ENCODE measurements at regions of chr1 and their contacts with region 1.

Region 1: GRCh38 chr1:176897350-176898236 is 266.9 kb downstream of the ASTN1 start:
- DNase-seq: peak; percentile 79
- H3K4me3 ChIP-seq: peak overlapping the region; percentile 22 to 50; a peak in 2 of 4 replicates
- H3K27ac ChIP-seq: peak overlapping the region in 1 of 2 experiments; percentile 81; a peak in 2 of 4 replicates
- H3K4me1 ChIP-seq: peaks cover 0 to 12% of the 10 kb centered on the region in 2 experiments; a peak in 2 of 4 replicates
- H3K27me3 ChIP-seq: no peaks in the 10 kb centered on the region; the same call in 1 of the 2 replicates
- CTCF ChIP-seq: peak; percentile 94
- EP300 ChIP-seq: no peak
- RAD21 ChIP-seq: peak; percentile 87

Region 2: GRCh38 chr1:176811511-176812288 is 85.9 kb before region 1 on chr1:
- CTCF ChIA-PET with region 1: no interaction called
- POLR2A ChIA-PET with region 1: no interaction called
- DNase-seq: no peak
- H3K4me3 ChIP-seq: no peak overlapping the region
- H3K27ac ChIP-seq: no peak overlapping the region
- H3K4me1 ChIP-seq: no peaks in the 10 kb centered on the region
- H3K27me3 ChIP-seq: no peaks in the 10 kb centered on the region
- CTCF ChIP-seq: no peak
- EP300 ChIP-seq: no peak
- RAD21 ChIP-seq: no peak

Region 3: DNA sequence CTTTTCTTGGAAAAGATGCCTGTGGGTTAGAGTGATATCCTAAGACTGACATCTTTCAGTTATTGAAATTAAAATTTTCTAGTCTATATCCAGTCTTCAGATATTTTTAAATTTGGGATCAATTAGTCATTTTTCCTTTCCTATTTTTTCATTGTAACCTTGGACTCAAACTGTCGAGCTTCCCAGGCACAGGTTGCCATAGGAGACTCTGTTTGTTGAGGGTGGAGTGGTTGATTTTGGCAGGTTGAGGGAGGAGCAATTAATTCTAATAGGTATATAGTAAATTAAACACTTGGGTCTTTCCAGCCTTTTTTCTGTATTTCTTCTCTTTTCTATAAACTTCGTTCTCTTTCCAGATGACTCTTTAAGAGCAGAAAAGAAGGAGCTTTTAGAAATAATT is 59.9 kb before region 1 on chr1:
- CTCF ChIA-PET with region 1: no interaction called
- POLR2A ChIA-PET with region 1: no interaction called
- DNase-seq: no peak
- H3K4me3 ChIP-seq: no peak overlapping the region
- H3K27ac ChIP-seq: no peak overlapping the region
- H3K4me1 ChIP-seq: no peaks in the 10 kb centered on the region; a peak in 2 of 4 replicates
- H3K27me3 ChIP-seq: no peaks in the 10 kb centered on the region
- CTCF ChIP-seq: no peak
- EP300 ChIP-seq: no peak
- RAD21 ChIP-seq: no peak

Region 4: GRCh38 chr1:176919386-176920378 is 22.1 kb after region 1 on chr1:
- CTCF ChIA-PET with region 1: interaction called, 11 read pairs
- POLR2A ChIA-PET with region 1: no interaction called
- DNase-seq: no peak
- H3K4me3 ChIP-seq: no peak overlapping the region
- H3K27ac ChIP-seq: no peak overlapping the region
- H3K4me1 ChIP-seq: peaks cover 0 to 4% of the 10 kb centered on the region in 2 experiments; a peak in 2 of 4 replicates
- H3K27me3 ChIP-seq: no peaks in the 10 kb centered on the region
- CTCF ChIP-seq: no peak
- EP300 ChIP-seq: no peak
- RAD21 ChIP-seq: no peak

Region 5: GRCh38 chr1:177170756-177171535 is 273.4 kb after region 1 on chr1 and contains the start of gene BRINP2:
- CTCF ChIA-PET with region 1: interaction called, 19 read pairs
- POLR2A ChIA-PET with region 1: no interaction called
- DNase-seq: peak; percentile 91
- H3K4me3 ChIP-seq: peak within 1 kb of the TSS; percentile 57 to 69
- H3K27ac ChIP-seq: peak within 1 kb of the TSS in 1 of 2 experiments; percentile 78; a peak in 2 of 4 replicates
- H3K4me1 ChIP-seq: peaks cover 0 to 14% of the 10 kb centered on the region in 2 experiments; a peak in 2 of 4 replicates
- H3K27me3 ChIP-seq: peaks cover 18% of the 10 kb centered on the region
- CTCF ChIP-seq: no peak
- EP300 ChIP-seq: no peak
- RAD21 ChIP-seq: no peak
- polyA plus RNA-seq, gene BRINP2: 0.12 and 0.62 TPM in 2 replicates

Region 6: GRCh38 chr1:177355595-177355994 is 458.0 kb after region 1 on chr1:
- CTCF ChIA-PET with region 1: interaction called, 59 read pairs
- POLR2A ChIA-PET with region 1: no interaction called
- DNase-seq: peak; percentile 41
- H3K4me3 ChIP-seq: no peak overlapping the region
- H3K27ac ChIP-seq: no peak overlapping the region
- H3K4me1 ChIP-seq: no peaks in the 10 kb centered on the region
- H3K27me3 ChIP-seq: no peaks in the 10 kb centered on the region
- CTCF ChIP-seq: peak; percentile 45
- EP300 ChIP-seq: no peak
- RAD21 ChIP-seq: peak; percentile 77

Region 7: GRCh38 chr1:177786176-177786745 is 888.7 kb after region 1 on chr1:
- CTCF ChIA-PET with region 1: interaction called, 53 read pairs
- POLR2A ChIA-PET with region 1: no interaction called
- DNase-seq: no peak
- H3K4me3 ChIP-seq: no peak overlapping the region
- H3K27ac ChIP-seq: no peak overlapping the region
- H3K4me1 ChIP-seq: no peaks in the 10 kb centered on the region
- H3K27me3 ChIP-seq: no peaks in the 10 kb centered on the region
- CTCF ChIP-seq: no peak
- EP300 ChIP-seq: no peak
- RAD21 ChIP-seq: no peak

Measured in SK-N-SH (cell line).